ENCODE measurements at regions of chr21 and their contacts with region 1.

Region 1: DNA sequence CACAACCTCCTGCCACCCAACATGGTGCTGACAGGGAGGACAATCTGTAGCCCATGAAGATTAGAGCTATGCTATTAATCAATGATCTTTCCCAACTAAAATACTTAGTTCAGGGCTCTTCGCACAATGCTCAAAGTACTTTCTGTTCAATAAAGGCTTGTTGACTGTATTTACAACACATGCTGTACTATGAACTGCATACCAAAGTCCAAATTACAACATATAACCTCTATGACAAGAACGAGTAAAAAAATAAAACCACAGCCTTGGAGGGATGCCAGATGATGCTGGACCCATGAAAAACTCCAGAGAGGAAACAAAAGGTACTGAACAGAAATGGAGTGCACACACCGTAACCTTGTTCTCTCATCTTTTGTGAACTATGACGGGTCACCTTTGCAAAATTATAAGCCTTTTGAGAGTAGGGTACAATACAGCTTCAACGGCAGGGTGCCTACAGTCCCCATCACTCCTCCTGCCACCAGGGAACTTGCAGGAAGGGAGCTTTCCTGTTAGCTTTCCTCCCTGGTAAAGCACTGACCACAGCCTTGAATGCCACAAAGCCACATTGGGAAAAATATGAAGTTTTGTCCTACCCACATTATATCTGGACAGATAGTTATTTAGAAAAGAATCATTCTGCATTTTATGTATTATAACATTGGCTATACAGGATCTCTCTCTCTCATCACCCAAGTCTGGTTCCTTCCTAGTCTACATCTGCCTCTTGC is 175.6 kb downstream of the NRIP1 start:
- DNase-seq: no peak
- ATAC-seq: no peak
- H3K4me3 ChIP-seq: no peak overlapping the region
- H3K27ac ChIP-seq: no peak overlapping the region
- H3K4me1 ChIP-seq: peaks cover 7% of the 10 kb centered on the region
- H3K27me3 ChIP-seq: peaks cover 0 to 2% (median 0%) of the 10 kb centered on the region in 3 donors
- CTCF ChIP-seq: no peak

Region 2: DNA sequence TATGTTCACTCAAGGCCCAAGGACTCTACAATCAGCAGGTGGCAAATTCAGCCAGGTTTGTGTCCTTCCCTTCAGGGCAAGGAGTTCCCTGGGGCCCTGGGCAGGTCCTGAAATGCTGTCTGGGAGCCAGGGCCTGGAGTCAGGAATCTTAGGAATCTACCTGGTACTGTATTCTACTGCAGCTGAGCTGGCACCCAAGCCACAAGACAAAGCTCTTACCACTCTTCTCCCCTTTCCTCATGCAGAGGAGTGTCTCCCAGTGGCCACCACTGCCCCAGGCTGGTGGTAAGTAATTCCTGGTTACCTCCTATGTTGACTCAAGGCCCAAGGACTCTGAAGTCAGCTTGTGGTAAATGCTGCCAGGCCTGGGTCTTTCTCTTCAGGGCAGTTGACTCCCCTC is 22.1 kb after region 1 on chr21:
- intact Hi-C with region 1: loop called in 1 of 2 experiments (anchors 1 kb)
- DNase-seq: no peak
- ATAC-seq: no peak
- H3K4me3 ChIP-seq: no peak overlapping the region
- H3K27ac ChIP-seq: no peak overlapping the region
- H3K4me1 ChIP-seq: no peaks in the 10 kb centered on the region
- H3K27me3 ChIP-seq: no peaks in the 10 kb centered on the region
- CTCF ChIP-seq: no peak

Measured in psoas muscle (tissue), 8 donors.